ENCODE measurements at regions of chr11 and their contacts with region 1.

Region 1: DNA sequence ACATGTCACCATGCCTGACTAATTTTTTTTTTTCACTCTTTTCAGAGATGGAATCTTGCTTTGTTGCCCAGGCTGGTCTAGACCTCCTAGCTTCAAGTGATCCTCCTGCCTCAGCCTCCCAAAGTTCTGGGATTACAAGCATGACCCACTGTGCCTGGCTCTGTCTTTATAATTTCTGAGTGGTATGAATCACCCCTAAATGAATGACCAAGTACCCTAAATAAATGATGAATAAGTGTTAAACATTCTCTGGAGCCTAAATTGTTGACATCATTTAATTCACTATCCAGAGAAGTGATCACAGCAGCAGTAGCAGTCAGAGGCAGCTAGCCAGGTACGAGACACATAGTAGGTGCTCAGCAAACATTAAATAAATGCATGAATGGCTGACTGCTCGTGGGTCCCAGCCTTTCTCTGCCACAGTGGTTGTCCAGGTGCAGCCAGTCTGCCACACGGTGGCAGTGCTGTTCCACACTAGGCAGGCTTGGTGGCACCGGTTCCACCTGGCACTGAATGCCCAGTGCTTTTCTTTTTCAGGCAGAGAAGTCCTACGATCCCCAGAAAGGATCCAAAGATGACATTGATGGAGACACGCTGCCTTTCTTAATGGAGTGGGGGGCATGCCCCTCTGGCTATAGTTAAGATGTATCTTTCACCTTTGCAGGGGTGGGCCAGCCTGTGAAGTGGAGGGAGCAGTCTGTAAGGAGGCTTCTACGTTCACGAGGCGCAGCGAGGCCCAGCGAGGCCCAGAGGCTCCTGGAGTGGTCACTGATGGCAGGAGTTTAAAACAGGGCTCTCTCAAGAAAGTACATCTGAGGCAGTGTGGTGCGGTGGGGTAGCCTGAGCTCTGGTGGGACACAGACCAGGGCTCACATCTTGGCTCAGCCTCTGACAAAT is 8.7 kb upstream of the TTC12 start:
- DNase-seq: peak; percentile 65 to 88 (median 86)
- ATAC-seq: peak; percentile 95
- H3K4me3 ChIP-seq: no peak overlapping the region
- H3K4me1 ChIP-seq: no peaks in the 10 kb centered on the region
- CTCF ChIP-seq: peak; percentile 87

Region 2: DNA sequence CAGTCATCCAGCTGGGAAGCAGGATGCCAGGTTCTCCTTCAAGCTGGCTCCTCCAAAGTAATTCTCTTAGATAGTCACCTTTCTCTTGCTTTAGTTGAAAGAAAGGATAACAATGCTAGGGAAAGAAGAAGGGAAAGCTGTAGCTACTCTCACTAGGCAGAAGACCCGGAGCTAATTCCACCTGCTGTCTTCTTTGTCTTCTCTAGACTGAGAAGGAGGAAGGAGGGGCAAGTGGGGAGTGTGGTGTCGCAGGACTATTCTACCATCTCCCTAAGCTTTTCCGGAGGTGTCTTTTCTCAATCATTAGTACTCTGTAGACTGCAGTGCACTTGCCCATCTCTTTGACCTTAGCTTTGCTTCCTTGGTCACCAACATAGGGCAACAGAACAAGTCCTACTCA is 181.7 kb before region 1 on chr11:
- intact Hi-C with region 1: no loop called
- DNase-seq: no peak
- ATAC-seq: no peak
- H3K4me3 ChIP-seq: no peak overlapping the region
- H3K4me1 ChIP-seq: no peaks in the 10 kb centered on the region
- CTCF ChIP-seq: no peak

Region 3: GRCh38 chr11:113532697-113533424 is 227.2 kb after region 1 on chr11:
- intact Hi-C with region 1: loop called (anchors 2 to 5 kb)
- DNase-seq: peak in 2 of 3 donors; percentile 75 to 91
- ATAC-seq: peak; percentile 84
- H3K4me3 ChIP-seq: no peak overlapping the region
- H3K4me1 ChIP-seq: no peaks in the 10 kb centered on the region
- CTCF ChIP-seq: peak; percentile 60

Region 4: DNA sequence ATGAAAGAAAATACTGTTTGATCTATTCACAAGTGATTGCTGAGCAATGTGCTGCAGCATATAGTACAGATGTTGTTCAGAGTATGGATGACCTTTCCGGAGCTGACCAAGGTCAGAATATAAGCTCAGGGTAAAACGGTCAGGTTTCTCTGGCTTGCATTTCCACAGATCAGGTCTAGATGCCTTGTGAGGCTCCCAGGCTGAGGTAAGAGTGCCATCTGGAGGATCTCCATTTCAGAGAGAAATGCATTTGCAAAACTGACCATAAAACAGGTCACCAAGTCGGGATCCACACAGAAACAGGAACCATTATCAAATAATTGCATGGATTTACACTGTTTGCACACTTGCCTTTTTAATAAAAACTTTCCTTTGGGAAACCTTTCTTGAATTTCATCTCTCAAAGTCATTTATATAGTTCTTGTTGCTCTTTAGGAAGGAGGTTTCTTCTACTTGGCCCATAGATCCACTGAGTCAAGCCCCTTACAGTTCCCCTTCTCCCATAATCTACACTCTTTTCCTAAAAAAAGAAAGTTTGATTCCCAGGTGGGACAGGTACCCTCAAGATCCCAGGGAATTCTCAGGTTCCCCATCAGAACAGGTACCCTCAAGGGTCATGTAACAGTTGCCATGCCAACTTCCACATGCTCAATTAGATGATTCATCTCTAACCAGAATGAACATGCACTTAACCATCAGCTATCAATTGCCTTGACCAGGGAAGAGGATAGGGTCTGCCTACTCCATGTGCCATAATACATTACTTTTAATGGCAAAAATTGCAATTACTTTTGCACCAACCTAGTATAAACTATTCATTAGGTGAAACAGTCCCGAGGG is 425.4 kb after region 1 on chr11:
- intact Hi-C with region 1: loop called (anchors 5 to 10 kb)
- DNase-seq: peak in 1 of 3 donors; percentile 58
- ATAC-seq: peak; percentile 76
- H3K4me3 ChIP-seq: no peak overlapping the region
- H3K4me1 ChIP-seq: no peaks in the 10 kb centered on the region
- CTCF ChIP-seq: no peak

Measured in mucosa of descending colon (tissue), 3 donors.